ENCODE measurements at regions of chr16 and their contacts with region 1.

Region 1: GRCh38 chr16:67521095-67521804 is 7.4 kb upstream of the RIPOR1 start:
- DNase-seq: peak; percentile 99
- ATAC-seq: peak; percentile 94
- H3K4me3 Mint-ChIP-seq: peak overlapping the region; percentile 80
- H3K27ac Mint-ChIP-seq: peak overlapping the region; percentile 97
- H3K4me1 Mint-ChIP-seq: peaks cover 10% of the 10 kb centered on the region
- H3K27me3 Mint-ChIP-seq: no peaks in the 10 kb centered on the region

Region 2: DNA sequence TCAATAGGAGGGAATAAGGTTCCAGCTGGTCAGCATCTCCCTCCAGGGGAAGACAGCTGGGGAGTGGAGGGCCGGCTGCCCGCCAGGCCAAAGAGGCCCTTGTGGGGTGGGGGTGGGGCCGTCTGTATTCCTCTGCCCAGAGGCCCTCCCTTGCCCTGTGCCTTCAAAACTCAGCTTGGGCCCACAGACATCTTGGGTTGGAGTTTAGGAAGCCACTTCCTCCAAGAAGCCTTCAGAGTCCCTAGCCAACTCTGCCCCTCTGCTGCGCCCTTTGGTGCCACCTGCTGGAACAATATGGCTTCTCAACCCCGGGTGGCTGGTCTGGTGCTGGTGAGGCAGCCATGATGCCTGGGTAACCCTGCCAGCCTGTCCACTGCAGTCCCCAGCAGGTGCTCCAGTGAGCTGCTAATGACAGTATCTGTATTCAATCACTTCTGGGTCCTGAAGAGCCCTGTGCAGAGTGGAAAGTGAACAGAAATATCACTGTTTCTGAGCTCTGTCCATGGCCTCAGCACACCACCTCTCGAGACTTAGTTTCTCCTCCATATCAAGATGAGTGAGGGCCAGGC is 73.7 kb before region 1 on chr16:
- CTCF ChIA-PET with region 1: interaction called, 11 read pairs
- POLR2A ChIA-PET with region 1: no interaction called
- intact Hi-C with region 1: no loop called
- DNase-seq: peak; percentile 89
- ATAC-seq: peak; percentile 99
- H3K4me3 Mint-ChIP-seq: no peak overlapping the region
- H3K27ac Mint-ChIP-seq: no peak overlapping the region
- H3K4me1 Mint-ChIP-seq: no peaks in the 10 kb centered on the region
- H3K27me3 Mint-ChIP-seq: no peaks in the 10 kb centered on the region

Region 3: DNA sequence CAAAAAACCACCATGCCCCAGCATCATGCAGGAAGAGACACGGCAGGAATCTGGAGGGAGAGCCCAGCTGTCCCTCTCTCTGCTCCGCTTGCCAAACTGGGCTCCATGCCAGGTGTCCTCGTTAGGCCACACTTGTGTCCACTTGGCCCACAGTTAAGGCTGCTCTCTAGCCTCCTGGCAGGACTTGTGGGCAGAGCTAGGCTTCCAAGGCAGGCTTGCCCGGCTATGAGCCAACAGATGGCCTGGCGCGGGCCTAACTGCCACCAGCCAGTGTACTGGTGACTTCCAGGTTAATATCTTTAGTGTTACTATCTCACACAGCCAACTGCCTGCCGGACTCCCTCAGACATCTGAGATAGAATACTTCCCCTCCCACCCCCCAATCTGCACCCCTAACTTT is 50.9 kb before region 1 on chr16:
- CTCF ChIA-PET with region 1: no interaction called
- POLR2A ChIA-PET with region 1: no interaction called
- intact Hi-C with region 1: no loop called
- DNase-seq: no peak
- ATAC-seq: no peak
- H3K4me3 Mint-ChIP-seq: no peak overlapping the region
- H3K27ac Mint-ChIP-seq: peak overlapping the region; percentile 0
- H3K4me1 Mint-ChIP-seq: peaks cover 17% of the 10 kb centered on the region
- H3K27me3 Mint-ChIP-seq: no peaks in the 10 kb centered on the region

Region 4: DNA sequence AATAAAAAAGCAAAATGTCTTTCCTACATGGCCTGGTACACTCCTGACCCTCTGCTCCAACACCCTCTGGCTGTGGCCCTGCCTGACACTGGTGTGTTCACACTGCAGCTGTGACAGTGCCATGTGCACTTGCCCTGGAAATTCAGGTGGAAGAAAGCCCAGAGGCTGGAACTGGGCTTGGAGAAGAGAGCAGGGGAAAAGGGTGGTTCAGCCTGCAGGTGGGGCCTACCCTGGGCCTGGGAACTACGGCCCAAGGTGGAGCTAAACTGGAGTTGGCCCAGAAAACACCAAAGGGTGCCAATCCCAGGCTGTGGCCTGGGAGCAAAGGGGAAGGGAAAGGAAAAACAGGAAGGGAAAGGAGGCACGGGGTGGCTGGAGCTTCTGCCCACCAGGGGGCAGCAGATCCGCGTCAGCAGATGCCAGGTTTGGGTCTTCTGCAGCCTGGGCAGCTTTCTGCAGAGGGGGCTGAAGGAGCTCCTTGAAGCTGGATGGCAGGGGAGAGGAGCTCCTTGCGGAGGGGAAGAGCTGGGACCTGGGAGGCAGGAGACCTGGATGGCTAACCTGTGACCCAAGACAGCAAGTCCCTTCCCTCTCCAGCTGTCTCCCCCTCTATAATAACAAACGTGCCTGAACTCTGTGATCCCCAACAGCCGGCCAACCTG is 25.6 kb after region 1 on chr16:
- CTCF ChIA-PET with region 1: interaction called, 24 read pairs
- POLR2A ChIA-PET with region 1: no interaction called
- intact Hi-C with region 1: no loop called
- DNase-seq: peak; percentile 86
- ATAC-seq: peak; percentile 63
- H3K4me3 Mint-ChIP-seq: no peak overlapping the region
- H3K27ac Mint-ChIP-seq: peak overlapping the region; percentile 89
- H3K4me1 Mint-ChIP-seq: peaks cover 35% of the 10 kb centered on the region
- H3K27me3 Mint-ChIP-seq: no peaks in the 10 kb centered on the region

Region 5: DNA sequence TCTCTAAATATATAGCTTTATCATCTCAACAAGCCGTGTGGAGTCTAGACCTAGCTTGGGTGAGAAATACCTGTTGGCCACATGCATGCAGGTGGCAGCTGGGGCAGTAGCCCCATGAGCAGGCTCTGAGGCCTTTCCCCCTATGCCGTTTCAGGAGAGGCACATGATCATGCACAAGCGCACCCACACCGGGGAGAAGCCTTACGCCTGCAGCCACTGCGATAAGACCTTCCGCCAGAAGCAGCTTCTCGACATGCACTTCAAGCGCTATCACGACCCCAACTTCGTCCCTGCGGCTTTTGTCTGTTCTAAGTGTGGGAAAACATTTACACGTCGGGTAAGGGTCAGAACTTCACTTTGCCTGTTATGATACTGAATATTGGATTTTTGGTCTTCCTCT is 107.0 kb after region 1 on chr16:
- CTCF ChIA-PET with region 1: interaction called, 13 read pairs
- POLR2A ChIA-PET with region 1: no interaction called
- intact Hi-C with region 1: no loop called
- DNase-seq: no peak
- ATAC-seq: no peak
- H3K4me3 Mint-ChIP-seq: no peak overlapping the region
- H3K27ac Mint-ChIP-seq: no peak overlapping the region
- H3K4me1 Mint-ChIP-seq: no peaks in the 10 kb centered on the region
- H3K27me3 Mint-ChIP-seq: no peaks in the 10 kb centered on the region

Region 6: GRCh38 chr16:67667817-67668494 is 146.7 kb after region 1 on chr16:
- CTCF ChIA-PET with region 1: interaction called, 99 read pairs
- POLR2A ChIA-PET with region 1: no interaction called
- intact Hi-C with region 1: loop called (anchors 1 kb)
- DNase-seq: peak; percentile 92
- ATAC-seq: peak; percentile 91
- H3K4me3 Mint-ChIP-seq: no peak overlapping the region
- H3K27ac Mint-ChIP-seq: no peak overlapping the region
- H3K4me1 Mint-ChIP-seq: peaks cover 19% of the 10 kb centered on the region
- H3K27me3 Mint-ChIP-seq: no peaks in the 10 kb centered on the region

Region 7: DNA sequence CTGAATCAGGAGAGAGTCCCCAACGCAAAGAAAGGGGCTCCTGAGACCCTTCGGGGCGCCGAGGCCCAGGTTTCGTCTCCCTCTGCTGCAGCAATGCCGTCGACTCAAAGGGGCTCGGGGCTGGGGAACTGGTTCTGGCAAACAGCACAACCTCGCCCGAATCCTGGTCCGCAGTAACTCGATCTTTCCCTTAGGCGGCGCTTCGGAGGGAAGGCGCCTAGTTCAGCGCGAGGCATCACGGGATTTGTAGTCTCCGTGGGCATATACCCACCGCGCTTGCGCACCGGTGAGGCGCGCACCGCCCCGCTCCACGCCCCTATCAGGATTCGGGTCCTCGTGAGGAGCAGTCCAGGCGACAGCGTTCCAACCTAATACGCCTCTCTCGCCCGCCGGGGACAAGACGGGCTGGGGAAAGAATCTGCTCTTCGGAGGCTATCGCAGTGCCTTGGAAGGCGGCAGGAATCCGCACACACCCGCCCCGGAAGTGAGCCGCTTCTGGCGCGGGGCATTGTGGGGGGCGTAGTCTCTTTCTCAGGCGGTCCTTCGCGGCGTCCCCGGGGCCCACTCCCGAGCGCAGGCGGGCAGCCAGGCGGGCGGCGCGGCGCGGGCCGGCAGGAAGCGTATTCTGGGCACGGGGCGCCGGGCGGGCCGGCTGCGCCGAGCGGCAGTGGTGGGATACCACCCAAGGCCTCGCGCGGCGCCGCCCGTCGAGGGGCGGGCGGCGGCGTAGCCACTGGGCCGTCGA is 320.7 kb after region 1 on chr16 and contains the start of gene THAP11:
- CTCF ChIA-PET with region 1: interaction called, 4 read pairs
- POLR2A ChIA-PET with region 1: interaction called, 3 read pairs
- intact Hi-C with region 1: loop called (anchors 2 to 10 kb)
- DNase-seq: peak; percentile 97
- ATAC-seq: peak; percentile 55
- H3K4me3 Mint-ChIP-seq: peak within 1 kb of the TSS; percentile 94
- H3K27ac Mint-ChIP-seq: peak within 1 kb of the TSS; percentile 97
- H3K4me1 Mint-ChIP-seq: peaks cover 33% of the 10 kb centered on the region
- H3K27me3 Mint-ChIP-seq: no peaks in the 10 kb centered on the region
- total RNA-seq, gene THAP11: 31.8 to 34.5 TPM